Stomach (tissue), 19 donors: ENCODE measurements at regions of chr5 and their contacts with region 1.

Region 1: GRCh38 chr5:87780831-87781760 is 368.4 kb upstream of the CCNH start:
- DNase-seq: peak; percentile 76 to 95
- H3K4me3 ChIP-seq: no peak overlapping the region
- H3K27ac ChIP-seq: no peak overlapping the region
- H3K4me1 ChIP-seq: peaks cover 0 to 6% (median 3%) of the 10 kb centered on the region in 4 donors
- H3K27me3 ChIP-seq: peaks cover 0 to 42% (median 3%) of the 10 kb centered on the region in 3 donors
- CTCF ChIP-seq: peak in 5 of 7 experiments; percentile 67 to 86 (median 76)
- EP300 ChIP-seq: no peak
- POLR2A ChIP-seq: no peak

Region 2: GRCh38 chr5:88021141-88021540 is 240.0 kb after region 1 on chr5:
- intact Hi-C with region 1: no loop called
- DNase-seq: no peak
- H3K4me3 ChIP-seq: no peak overlapping the region
- H3K27ac ChIP-seq: no peak overlapping the region
- H3K4me1 ChIP-seq: no peaks in the 10 kb centered on the region
- H3K27me3 ChIP-seq: no peaks in the 10 kb centered on the region
- CTCF ChIP-seq: no peak
- EP300 ChIP-seq: no peak
- POLR2A ChIP-seq: no peak

Region 3: GRCh38 chr5:88690409-88691229 is 909.5 kb after region 1 on chr5:
- intact Hi-C with region 1: loop called (anchors 5 kb)
- DNase-seq: peak; percentile 76 to 89
- H3K4me3 ChIP-seq: peak overlapping the region in 3 of 4 donors; percentile 9 to 45 (median 30)
- H3K27ac ChIP-seq: no peak overlapping the region
- H3K4me1 ChIP-seq: peaks cover 12 to 41% (median 33%) of the 10 kb centered on the region in 4 donors
- H3K27me3 ChIP-seq: peaks cover 47 to 100% (median 99%) of the 10 kb centered on the region in 3 donors
- CTCF ChIP-seq: peak in 5 of 7 experiments; percentile 64 to 94 (median 90)
- EP300 ChIP-seq: no peak
- POLR2A ChIP-seq: no peak